Gastrocnemius medialis (tissue), 4 donors: ENCODE measurements at regions of chr6 and their contacts with region 1.

Region 1: GRCh38 chr6:55953335-55953734 is 77.9 kb upstream of the BMP5 start:
- DNase-seq: no peak
- ATAC-seq: peak in 1 of 2 donors; percentile 46
- H3K4me3 ChIP-seq: peak overlapping the region in 2 of 4 donors; percentile 6 to 29
- H3K27ac ChIP-seq: no peak overlapping the region
- H3K4me1 ChIP-seq: peaks cover 0 to 4% of the 10 kb centered on the region in 2 donors
- H3K27me3 ChIP-seq: no peaks in the 10 kb centered on the region
- CTCF ChIP-seq: peak in 2 of 5 experiments; percentile 9 to 19
- POLR2A ChIP-seq: no peak

Region 2: DNA sequence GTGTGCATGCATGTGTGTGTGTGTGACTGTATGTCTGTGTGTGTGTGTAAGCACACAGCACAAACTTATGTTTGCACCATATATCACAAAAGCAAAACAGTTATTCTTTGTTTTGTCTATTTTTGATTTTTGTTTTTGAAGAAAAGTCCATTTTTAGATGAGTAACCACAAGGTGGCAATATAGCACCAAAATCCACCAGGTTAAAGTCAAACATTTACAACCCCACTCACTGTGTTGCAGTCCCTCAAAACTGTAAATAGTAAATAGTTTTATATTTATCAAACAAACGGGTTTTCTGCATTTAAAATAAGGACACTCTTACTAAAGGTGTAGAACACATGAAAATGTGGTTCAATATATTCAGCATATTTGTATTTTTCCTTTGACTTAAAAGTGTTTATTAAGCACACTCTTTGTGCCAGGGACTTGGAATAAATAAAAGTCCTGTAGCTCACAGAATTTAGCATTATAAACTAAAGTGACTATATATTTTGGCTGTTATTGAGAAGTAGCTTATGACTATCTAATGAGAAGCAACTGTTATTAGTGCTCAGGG is 507.6 kb before region 1 on chr6:
- in situ Hi-C with region 1: loop called in 1 of 4 experiments (anchors 25 kb)
- intact Hi-C with region 1: loop called (anchors 5 kb)
- DNase-seq: no peak
- ATAC-seq: no peak
- H3K4me3 ChIP-seq: no peak overlapping the region
- H3K27ac ChIP-seq: no peak overlapping the region
- H3K4me1 ChIP-seq: no peaks in the 10 kb centered on the region
- H3K27me3 ChIP-seq: peaks cover 0 to 3% (median 0%) of the 10 kb centered on the region in 3 donors
- CTCF ChIP-seq: peak in 4 of 5 experiments; percentile 17 to 37 (median 32)
- POLR2A ChIP-seq: no peak

Region 3: DNA sequence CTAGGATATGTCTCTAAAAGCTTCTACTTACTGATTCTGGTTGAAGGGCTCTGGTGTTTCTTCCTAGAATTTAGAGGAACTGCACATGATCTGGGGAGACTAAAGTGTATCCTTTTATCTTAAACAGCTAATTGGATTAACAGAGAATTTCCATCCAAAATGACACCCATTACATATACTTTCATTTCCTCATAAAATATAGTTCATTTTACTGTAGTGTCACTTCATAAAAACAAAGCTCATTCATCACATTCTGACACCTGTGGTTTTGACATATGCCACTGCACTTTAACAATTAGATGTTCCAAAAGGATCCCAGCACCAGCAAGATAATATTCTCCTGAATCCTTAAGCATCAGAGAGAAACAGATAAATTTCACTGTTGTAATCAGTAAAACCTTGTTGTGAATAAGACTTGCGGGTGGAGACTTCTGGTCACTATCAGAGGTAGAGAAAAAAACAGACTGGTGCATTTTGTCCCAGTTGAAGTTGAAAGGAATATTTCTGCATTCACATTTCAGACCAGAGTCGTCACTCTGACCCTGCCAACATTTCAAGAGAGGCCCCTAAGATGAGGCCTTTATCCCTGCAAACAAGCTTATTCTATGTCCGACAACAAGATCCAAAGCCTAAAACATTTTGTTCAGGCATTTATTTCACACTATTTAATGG is 97.3 kb after region 1 on chr6:
- in situ Hi-C with region 1: no loop called
- intact Hi-C with region 1: no loop called
- DNase-seq: no peak
- ATAC-seq: no peak
- H3K4me3 ChIP-seq: no peak overlapping the region
- H3K27ac ChIP-seq: no peak overlapping the region
- H3K4me1 ChIP-seq: no peaks in the 10 kb centered on the region
- H3K27me3 ChIP-seq: no peaks in the 10 kb centered on the region
- CTCF ChIP-seq: no peak
- POLR2A ChIP-seq: no peak